ENCODE measurements at regions of chr3 and their contacts with region 1.

Region 1: GRCh38 chr3:111978493-111979433 is at the start of gene ABHD10:
- DNase-seq: peak; percentile 93
- H3K4me3 Mint-ChIP-seq: peak within 1 kb of the TSS; percentile 89
- H3K27ac Mint-ChIP-seq: peak within 1 kb of the TSS; percentile 90
- H3K4me1 Mint-ChIP-seq: peaks cover 49% of the 10 kb centered on the region
- H3K27me3 Mint-ChIP-seq: peaks cover 14% of the 10 kb centered on the region
- total RNA-seq, gene ABHD10: 37.7 and 42.9 TPM in 2 replicates

Region 2: GRCh38 chr3:111238885-111239284 is 739.9 kb before region 1 on chr3:
- intact Hi-C with region 1: loop called (anchors 5 kb)
- DNase-seq: peak; percentile 48
- H3K4me3 Mint-ChIP-seq: peak overlapping the region; percentile 69
- H3K27ac Mint-ChIP-seq: peak overlapping the region; percentile 76
- H3K4me1 Mint-ChIP-seq: peaks cover 49% of the 10 kb centered on the region
- H3K27me3 Mint-ChIP-seq: no peaks in the 10 kb centered on the region

Region 3: DNA sequence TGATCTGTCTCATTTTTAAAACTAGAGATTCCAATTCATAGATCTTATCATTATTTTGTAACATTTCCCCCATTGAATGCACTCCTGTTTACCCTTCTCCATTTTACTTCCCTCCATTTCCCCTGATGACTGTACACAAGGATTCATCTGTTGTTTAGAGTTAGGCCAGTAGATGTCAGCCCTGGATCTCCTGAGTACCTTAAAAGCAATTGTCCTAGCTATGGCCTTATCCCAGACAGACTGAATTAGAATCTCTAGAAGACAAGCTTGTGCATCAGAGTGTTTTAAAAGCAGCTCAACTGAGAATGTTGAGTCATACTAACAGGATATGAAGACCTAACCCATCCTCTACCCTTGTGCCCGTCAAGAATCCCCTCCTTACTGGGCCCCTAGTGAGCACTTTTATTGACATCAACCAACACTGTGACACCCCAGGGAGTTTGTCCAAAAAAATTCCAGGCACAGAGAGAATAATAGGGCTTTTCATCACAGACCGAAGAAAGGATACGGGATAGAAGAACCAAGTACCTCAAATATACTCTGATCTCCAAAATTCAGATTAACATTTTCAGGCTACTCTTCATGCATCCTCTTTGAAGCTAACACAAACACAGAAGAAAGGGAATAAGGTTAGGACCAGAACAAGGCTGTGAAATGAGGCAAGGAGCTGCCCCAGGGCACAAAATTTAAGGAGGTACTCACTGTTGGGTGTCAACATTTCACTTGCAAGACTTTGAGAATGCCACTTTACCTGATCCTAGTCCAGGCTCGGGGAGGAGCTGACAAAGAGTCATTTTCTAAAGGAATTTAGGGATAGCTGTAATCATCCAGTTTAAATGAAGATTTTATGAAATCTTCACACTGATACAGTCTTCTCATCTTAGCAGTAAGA is 400.7 kb before region 1 on chr3:
- intact Hi-C with region 1: loop called (anchors 2 kb)
- DNase-seq: no peak
- H3K4me3 Mint-ChIP-seq: peak overlapping the region; percentile 1
- H3K27ac Mint-ChIP-seq: peak overlapping the region; percentile 70
- H3K4me1 Mint-ChIP-seq: peaks cover 82% of the 10 kb centered on the region
- H3K27me3 Mint-ChIP-seq: no peaks in the 10 kb centered on the region

Region 4: GRCh38 chr3:111761309-111761831 is 217.4 kb before region 1 on chr3:
- intact Hi-C with region 1: no loop called
- DNase-seq: no peak
- H3K4me3 Mint-ChIP-seq: no peak overlapping the region
- H3K27ac Mint-ChIP-seq: no peak overlapping the region
- H3K4me1 Mint-ChIP-seq: peaks cover 7% of the 10 kb centered on the region
- H3K27me3 Mint-ChIP-seq: no peaks in the 10 kb centered on the region

Region 5: DNA sequence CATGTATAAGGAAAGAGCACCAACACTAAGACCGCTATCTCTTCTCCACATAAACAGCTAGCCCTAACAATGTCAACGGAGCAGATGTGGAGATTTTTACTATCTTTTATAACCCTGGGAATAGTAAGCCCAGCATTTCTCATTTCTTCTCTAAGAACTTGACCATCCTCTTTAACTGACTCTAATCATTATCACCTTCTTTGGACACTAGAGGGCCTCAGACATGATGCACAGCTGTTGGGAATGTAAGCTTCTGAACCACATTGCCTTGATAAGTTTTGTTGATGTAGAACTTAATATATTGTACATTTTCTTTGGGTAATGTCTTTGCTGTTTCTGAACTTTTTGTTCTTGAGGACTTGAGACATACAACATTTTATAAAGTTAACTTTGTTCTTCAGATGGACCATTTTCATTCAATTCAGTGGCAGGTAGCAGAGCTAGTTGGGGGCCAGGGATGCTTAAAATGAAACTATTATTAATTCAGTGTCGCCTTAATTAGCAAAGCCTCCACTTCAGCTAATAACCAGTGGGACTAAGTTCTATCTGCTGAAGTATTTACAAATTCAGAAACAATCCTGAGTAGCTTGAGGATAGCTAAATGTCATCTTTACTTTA is 10.4 kb after region 1 on chr3:
- intact Hi-C with region 1: loop called (anchors 1 kb)
- DNase-seq: no peak
- H3K4me3 Mint-ChIP-seq: no peak overlapping the region
- H3K27ac Mint-ChIP-seq: no peak overlapping the region
- H3K4me1 Mint-ChIP-seq: peaks cover 44% of the 10 kb centered on the region
- H3K27me3 Mint-ChIP-seq: no peaks in the 10 kb centered on the region

Region 6: DNA sequence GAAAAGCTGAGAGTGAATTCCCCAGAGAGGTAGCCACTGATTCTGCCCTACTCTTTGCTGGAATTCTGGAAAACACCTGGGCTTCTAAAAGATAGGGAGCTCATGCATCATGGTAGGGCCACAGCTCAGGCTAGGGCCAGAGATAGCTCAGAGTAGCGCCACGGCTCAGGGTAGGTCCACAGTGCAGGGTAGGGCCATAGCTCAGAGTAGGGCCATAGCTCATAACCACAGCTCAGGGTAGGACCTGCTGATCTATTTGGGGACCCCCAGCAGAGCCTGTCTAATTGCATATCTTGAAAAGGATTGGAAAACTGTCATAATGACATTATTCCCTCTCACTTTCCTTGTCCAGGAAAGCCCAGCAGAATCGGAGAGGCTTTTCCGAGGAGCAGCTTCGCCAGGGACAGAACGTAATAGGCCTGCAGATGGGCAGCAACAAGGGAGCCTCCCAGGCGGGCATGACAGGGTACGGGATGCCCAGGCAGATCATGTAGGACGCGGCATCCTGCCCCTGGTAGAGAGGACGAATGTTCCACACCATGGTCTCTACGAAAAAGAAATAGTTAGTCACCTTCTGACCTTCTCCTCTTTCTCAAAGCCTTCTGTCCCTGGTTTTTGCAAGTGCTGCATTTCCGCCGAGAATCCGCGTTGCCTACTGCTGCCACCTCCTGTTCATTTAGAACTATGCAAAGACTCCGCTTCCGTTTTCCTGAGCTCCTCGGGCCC is 34.5 kb after region 1 on chr3:
- intact Hi-C with region 1: loop called (anchors 2 kb)
- DNase-seq: peak; percentile 38
- H3K4me3 Mint-ChIP-seq: no peak overlapping the region
- H3K27ac Mint-ChIP-seq: peak overlapping the region; percentile 79
- H3K4me1 Mint-ChIP-seq: peaks cover 28% of the 10 kb centered on the region
- H3K27me3 Mint-ChIP-seq: no peaks in the 10 kb centered on the region

Region 7: GRCh38 chr3:112043603-112044201 is 64.9 kb after region 1 on chr3:
- intact Hi-C with region 1: no loop called
- DNase-seq: peak; percentile 29
- H3K4me3 Mint-ChIP-seq: no peak overlapping the region
- H3K27ac Mint-ChIP-seq: no peak overlapping the region
- H3K4me1 Mint-ChIP-seq: no peaks in the 10 kb centered on the region
- H3K27me3 Mint-ChIP-seq: no peaks in the 10 kb centered on the region